IMR-90 (cell line): ENCODE measurements at regions of chr19 and their contacts with region 1.

Region 1: DNA sequence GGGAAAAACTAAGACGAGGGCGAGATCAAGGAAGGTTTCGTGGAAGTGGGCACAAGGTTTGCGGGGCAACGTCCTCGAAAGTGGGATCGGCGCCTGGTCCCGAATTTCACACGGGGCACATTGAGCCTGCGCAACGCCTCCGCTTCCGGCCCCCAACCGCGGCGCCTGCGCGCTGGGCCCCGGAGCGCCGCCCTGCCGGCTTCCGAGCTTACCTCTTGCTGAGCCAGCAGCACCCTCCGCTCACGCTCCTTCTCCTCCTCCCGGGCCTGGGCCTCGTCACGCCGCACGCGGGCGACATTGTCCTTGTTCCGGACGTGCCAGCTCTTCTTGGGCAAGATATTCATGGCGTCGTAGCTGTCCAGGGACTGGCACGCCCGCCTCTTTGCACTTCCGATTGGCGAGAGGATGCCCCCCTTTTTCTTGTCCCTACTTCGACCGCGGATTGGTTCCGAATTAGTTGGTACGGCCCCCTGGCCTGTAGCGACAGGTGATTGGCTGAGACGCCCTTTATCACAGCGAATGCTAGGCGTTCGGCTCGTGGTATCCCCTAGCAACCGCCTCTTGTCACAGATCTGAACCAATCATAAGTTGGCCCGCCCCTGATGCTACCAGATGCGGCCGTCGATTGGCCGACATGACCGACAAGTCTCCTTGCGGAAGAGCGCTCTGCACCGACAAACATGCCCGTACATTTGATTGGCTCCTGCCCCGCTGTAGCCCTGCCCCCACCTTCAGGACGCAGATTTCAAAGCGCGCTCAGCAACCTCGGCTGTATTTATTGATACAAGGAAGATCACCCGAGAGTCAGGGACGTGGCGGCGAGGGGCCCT is at the start of gene LENG1:
- DNase-seq: peak; percentile 100
- ATAC-seq: peak; percentile 91
- H3K4me3 ChIP-seq: peak within 1 kb of the TSS; percentile 60
- H3K27ac ChIP-seq: peak within 1 kb of the TSS; percentile 88
- H3K4me1 ChIP-seq: peaks cover 11% of the 10 kb centered on the region
- H3K27me3 ChIP-seq: no peaks in the 10 kb centered on the region
- CTCF ChIP-seq: peak; percentile 33; the same call in 1 of the 2 replicates
- POLR2A ChIP-seq: peak; percentile 96
- RAD21 ChIP-seq: no peak
- total RNA-seq, gene LENG1: 2.7 and 5.0 TPM in 2 replicates

Region 2: GRCh38 chr19:55279770-55280643 is 1120.4 kb after region 1 on chr19 and contains the start of gene HSPBP1:
- CTCF ChIA-PET with region 1: no interaction called
- POLR2A ChIA-PET with region 1: no interaction called
- dilution Hi-C with region 1: no loop called
- in situ Hi-C with region 1: no loop called
- intact Hi-C with region 1: loop called (anchors 5 kb)
- DNase-seq: peak; percentile 91
- ATAC-seq: peak; percentile 83
- H3K4me3 ChIP-seq: peak within 1 kb of the TSS; percentile 70
- H3K27ac ChIP-seq: peak within 1 kb of the TSS; percentile 62
- H3K4me1 ChIP-seq: peaks cover 15% of the 10 kb centered on the region
- H3K27me3 ChIP-seq: no peaks in the 10 kb centered on the region
- CTCF ChIP-seq: no peak
- POLR2A ChIP-seq: peak; percentile 80
- RAD21 ChIP-seq: no peak
- total RNA-seq, gene HSPBP1: 19.7 and 21.0 TPM in 2 replicates